Activated T-helper 1 cell treated with anti-CD3 and anti-CD28 coated beads, Interleukin-12 subunit alpha, Interleukin-12 subunit beta, Interleukin-2, Interleukin-4 antibody, amounts not matched to agents 30 ng/mL and 10 ng/mL and 1 ng/mL, durations not matched to agents 14 hours and 24 hours and 36 hours (primary cell): ENCODE measurements at regions of chr12 and their contacts with region 1.

Region 1: GRCh38 chr12:104604070-104604994 is 147.6 kb downstream of the CHST11 start:
- DNase-seq: peak; percentile 34
- H3K4me3 Mint-ChIP-seq: peak overlapping the region; percentile 62
- H3K27ac Mint-ChIP-seq: peak overlapping the region; percentile 88
- H3K4me1 Mint-ChIP-seq: peaks cover 66% of the 10 kb centered on the region
- H3K27me3 Mint-ChIP-seq: no peaks in the 10 kb centered on the region

Region 2: DNA sequence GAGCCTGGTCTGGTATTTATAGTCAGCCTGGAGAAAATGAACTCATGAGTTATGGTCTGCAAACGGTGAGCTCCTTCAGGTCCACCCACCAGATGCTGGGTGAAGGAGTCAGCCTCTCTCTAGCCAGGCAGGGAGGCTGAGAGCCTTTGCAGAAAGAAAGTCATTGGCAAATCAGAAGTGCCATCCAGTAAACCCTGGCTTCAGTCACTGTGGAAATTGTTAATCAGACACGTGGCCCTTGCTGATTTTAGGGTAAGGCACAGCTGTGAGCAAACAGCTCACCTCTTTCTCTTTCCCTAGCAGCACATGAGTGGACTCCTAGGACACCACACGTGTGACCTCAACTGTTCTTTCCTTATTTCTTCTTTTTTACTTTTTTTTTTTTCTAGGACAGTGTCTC is 102.7 kb before region 1 on chr12:
- intact Hi-C with region 1: loop called (anchors 1 kb)
- DNase-seq: no peak
- H3K4me3 Mint-ChIP-seq: no peak overlapping the region
- H3K27ac Mint-ChIP-seq: peak overlapping the region; percentile 64
- H3K4me1 Mint-ChIP-seq: peaks cover 91% of the 10 kb centered on the region
- H3K27me3 Mint-ChIP-seq: no peaks in the 10 kb centered on the region

Region 3: DNA sequence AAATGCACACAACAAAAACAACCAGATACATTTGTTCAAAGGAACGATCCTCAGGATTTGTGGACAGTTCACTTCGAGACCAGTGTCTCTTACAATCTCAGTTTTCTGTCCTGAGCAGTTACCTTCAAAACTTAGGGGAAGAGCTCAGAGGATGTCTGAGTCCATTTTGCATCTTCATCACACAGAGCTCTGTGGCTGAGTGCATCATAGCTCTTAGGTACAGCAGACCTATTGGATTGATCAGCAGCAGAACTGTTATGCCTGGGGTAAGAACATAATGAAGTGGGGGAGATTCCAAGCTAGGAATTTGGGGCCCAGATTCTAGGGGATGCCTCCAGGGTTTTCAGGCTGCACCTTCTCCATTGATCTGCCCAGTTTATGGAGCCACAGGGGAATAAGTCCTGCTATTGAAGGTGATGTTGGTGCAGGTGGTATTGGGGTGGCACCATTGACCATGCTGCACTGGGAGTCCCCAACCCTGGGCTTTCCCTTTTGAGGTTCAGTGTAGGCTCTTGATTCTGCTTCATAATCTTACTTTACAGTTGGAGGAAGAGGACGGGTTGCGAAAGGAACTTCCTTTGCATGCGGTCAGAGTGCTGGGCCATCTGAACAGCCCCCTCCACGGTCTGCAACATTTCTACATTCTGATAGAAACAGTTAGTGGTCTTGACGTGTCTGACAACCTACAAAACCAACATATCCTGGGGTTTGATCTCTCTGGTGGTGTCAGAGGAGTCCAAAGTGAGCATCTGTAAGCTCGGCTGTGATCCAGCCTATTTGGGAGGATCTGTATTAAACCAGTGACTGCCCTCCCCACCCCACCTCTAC is 34.8 kb before region 1 on chr12:
- intact Hi-C with region 1: loop called (anchors 1 kb)
- DNase-seq: peak; percentile 58
- H3K4me3 Mint-ChIP-seq: peak overlapping the region; percentile 64
- H3K27ac Mint-ChIP-seq: peak overlapping the region; percentile 89
- H3K4me1 Mint-ChIP-seq: peaks cover 63% of the 10 kb centered on the region
- H3K27me3 Mint-ChIP-seq: no peaks in the 10 kb centered on the region